MCF 10A (cell line): ENCODE measurements at regions of chr12 and their contacts with region 1.

Region 1: DNA sequence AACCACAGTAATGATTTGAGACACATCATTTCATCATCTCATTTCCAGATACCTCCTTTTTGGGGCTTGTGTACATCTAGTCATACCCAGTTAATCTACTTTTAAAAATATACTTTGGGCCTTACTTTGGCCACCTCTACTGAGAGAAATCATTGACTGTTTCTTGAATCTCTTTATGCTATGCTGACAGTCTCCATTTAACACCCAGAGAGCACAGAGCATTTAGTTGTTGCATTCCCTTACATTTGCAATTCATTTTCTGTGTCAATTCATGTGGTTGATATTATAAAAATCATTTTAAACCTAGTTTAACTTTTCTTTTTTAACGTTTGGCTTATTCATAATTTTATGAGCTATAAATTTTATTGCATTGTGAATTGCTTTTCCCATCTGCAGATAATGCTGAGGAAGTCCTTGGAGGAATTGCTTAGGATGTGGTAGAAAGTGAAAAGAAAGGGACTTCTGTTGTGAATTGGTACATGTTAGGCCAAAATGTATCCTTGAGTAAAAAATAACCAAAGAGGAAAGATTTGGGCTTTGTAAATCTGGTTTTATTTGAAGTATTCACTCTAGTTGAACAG is 17.0 kb upstream of the SLC15A5 start:
- DNase-seq: no peak
- H3K4me3 Mint-ChIP-seq: no peak overlapping the region
- H3K27ac Mint-ChIP-seq: no peak overlapping the region
- H3K4me1 Mint-ChIP-seq: no peaks in the 10 kb centered on the region
- H3K27me3 Mint-ChIP-seq: no peaks in the 10 kb centered on the region
- CTCF ChIP-seq: no peak

Region 2: GRCh38 chr12:16307821-16308475 is 13.5 kb after region 1 on chr12:
- CTCF ChIA-PET with region 1: no interaction called
- POLR2A ChIA-PET with region 1: interaction called, 3 read pairs
- intact Hi-C with region 1: loop called (anchors 1 kb)
- DNase-seq: no peak
- H3K4me3 Mint-ChIP-seq: no peak overlapping the region
- H3K27ac Mint-ChIP-seq: no peak overlapping the region
- H3K4me1 Mint-ChIP-seq: peaks cover 11% of the 10 kb centered on the region
- H3K27me3 Mint-ChIP-seq: no peaks in the 10 kb centered on the region
- CTCF ChIP-seq: no peak

Region 3: DNA sequence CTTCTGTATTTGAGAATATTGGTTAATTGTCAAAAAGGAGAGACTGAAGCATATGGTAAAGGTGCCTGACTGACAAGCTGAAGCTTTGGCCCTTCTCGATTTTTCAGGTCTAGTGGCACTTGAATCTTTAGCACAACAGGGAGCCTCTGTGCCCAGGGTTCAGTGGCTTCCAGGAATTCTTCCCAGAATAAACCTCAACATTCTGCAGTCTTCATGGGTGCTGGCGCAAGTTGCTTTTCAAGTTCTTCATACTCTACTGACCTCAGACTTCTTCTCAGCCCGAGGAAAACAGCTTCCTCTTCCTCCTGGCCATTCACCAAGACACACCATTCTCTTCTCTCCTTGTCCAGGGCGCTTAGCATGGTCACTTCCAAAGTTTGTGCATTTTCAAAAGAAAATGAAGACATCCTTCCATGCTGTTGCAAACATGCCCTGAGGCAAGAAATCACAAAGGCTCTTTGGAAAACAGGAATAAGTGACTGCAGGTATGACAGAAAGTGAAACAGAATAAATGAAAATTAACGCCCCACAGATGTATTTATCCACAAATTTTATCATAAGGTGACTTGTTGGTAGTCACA is 142.9 kb after region 1 on chr12:
- CTCF ChIA-PET with region 1: no interaction called
- POLR2A ChIA-PET with region 1: no interaction called
- intact Hi-C with region 1: no loop called
- DNase-seq: peak; percentile 3
- H3K4me3 Mint-ChIP-seq: no peak overlapping the region
- H3K27ac Mint-ChIP-seq: no peak overlapping the region
- H3K4me1 Mint-ChIP-seq: peaks cover 5% of the 10 kb centered on the region
- H3K27me3 Mint-ChIP-seq: no peaks in the 10 kb centered on the region
- CTCF ChIP-seq: no peak

Region 4: DNA sequence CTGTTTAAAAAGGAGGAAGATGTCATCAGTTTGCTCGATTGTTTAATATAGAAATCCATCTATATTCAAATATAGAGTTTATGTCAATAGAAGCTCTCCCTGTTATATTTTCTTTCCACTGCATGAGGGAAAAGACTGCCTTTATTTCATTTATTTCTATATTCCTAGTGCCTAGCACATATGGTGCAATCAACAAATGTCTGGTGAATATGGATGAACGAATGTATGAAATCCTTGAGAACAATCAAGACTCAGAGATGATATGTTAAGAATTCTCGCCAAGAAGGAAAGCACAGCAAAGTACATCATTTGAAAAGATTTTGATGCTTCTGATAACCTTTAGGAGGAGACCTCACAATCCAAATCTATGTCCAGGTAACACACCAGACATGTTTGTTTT is 607.5 kb after region 1 on chr12:
- CTCF ChIA-PET with region 1: no interaction called
- POLR2A ChIA-PET with region 1: no interaction called
- intact Hi-C with region 1: no loop called
- DNase-seq: no peak
- H3K4me3 Mint-ChIP-seq: no peak overlapping the region
- H3K27ac Mint-ChIP-seq: no peak overlapping the region
- H3K4me1 Mint-ChIP-seq: no peaks in the 10 kb centered on the region
- H3K27me3 Mint-ChIP-seq: peaks cover 32% of the 10 kb centered on the region
- CTCF ChIP-seq: no peak